Activated T-helper 1 cell treated with anti-CD3 and anti-CD28 coated beads, Interleukin-12 subunit alpha, Interleukin-12 subunit beta, Interleukin-2, Interleukin-4 antibody, amounts not matched to agents 30 ng/mL and 10 ng/mL and 1 ng/mL, durations not matched to agents 14 hours and 24 hours and 36 hours (primary cell): ENCODE measurements at regions of chr18 and their contacts with region 1.

Region 1: GRCh38 chr18:35616664-35617423 is 35.3 kb downstream of the GALNT1 start:
- DNase-seq: peak; percentile 45
- H3K4me3 Mint-ChIP-seq: no peak overlapping the region
- H3K27ac Mint-ChIP-seq: no peak overlapping the region
- H3K4me1 Mint-ChIP-seq: peaks cover 19% of the 10 kb centered on the region
- H3K27me3 Mint-ChIP-seq: no peaks in the 10 kb centered on the region

Region 2: GRCh38 chr18:34867520-34867919 is 749.3 kb before region 1 on chr18:
- intact Hi-C with region 1: loop called (anchors 5 kb)
- DNase-seq: no peak
- H3K4me3 Mint-ChIP-seq: no peak overlapping the region
- H3K27ac Mint-ChIP-seq: no peak overlapping the region
- H3K4me1 Mint-ChIP-seq: peaks cover 33% of the 10 kb centered on the region
- H3K27me3 Mint-ChIP-seq: peaks cover 20% of the 10 kb centered on the region

Region 3: GRCh38 chr18:35005963-35006577 is 610.8 kb before region 1 on chr18:
- intact Hi-C with region 1: no loop called
- DNase-seq: no peak
- H3K4me3 Mint-ChIP-seq: no peak overlapping the region
- H3K27ac Mint-ChIP-seq: no peak overlapping the region
- H3K4me1 Mint-ChIP-seq: no peaks in the 10 kb centered on the region
- H3K27me3 Mint-ChIP-seq: peaks cover 2% of the 10 kb centered on the region

Region 4: GRCh38 chr18:35407871-35408481 is 208.9 kb before region 1 on chr18:
- intact Hi-C with region 1: loop called (anchors 2 kb)
- DNase-seq: peak; percentile 25
- H3K4me3 Mint-ChIP-seq: no peak overlapping the region
- H3K27ac Mint-ChIP-seq: no peak overlapping the region
- H3K4me1 Mint-ChIP-seq: peaks cover 19% of the 10 kb centered on the region
- H3K27me3 Mint-ChIP-seq: peaks cover 5% of the 10 kb centered on the region

Region 5: GRCh38 chr18:35422237-35422636 is 194.6 kb before region 1 on chr18:
- intact Hi-C with region 1: no loop called
- DNase-seq: no peak
- H3K4me3 Mint-ChIP-seq: no peak overlapping the region
- H3K27ac Mint-ChIP-seq: no peak overlapping the region
- H3K4me1 Mint-ChIP-seq: no peaks in the 10 kb centered on the region
- H3K27me3 Mint-ChIP-seq: peaks cover 3% of the 10 kb centered on the region

Region 6: GRCh38 chr18:35484034-35484433 is 132.8 kb before region 1 on chr18:
- intact Hi-C with region 1: loop called (anchors 1 kb)
- DNase-seq: no peak
- H3K4me3 Mint-ChIP-seq: no peak overlapping the region
- H3K27ac Mint-ChIP-seq: no peak overlapping the region
- H3K4me1 Mint-ChIP-seq: peaks cover 3% of the 10 kb centered on the region
- H3K27me3 Mint-ChIP-seq: no peaks in the 10 kb centered on the region

Region 7: GRCh38 chr18:35605686-35606417 is 11.0 kb before region 1 on chr18:
- intact Hi-C with region 1: loop called (anchors 2 kb)
- DNase-seq: no peak
- H3K4me3 Mint-ChIP-seq: no peak overlapping the region
- H3K27ac Mint-ChIP-seq: no peak overlapping the region
- H3K4me1 Mint-ChIP-seq: no peaks in the 10 kb centered on the region
- H3K27me3 Mint-ChIP-seq: no peaks in the 10 kb centered on the region

Region 8: DNA sequence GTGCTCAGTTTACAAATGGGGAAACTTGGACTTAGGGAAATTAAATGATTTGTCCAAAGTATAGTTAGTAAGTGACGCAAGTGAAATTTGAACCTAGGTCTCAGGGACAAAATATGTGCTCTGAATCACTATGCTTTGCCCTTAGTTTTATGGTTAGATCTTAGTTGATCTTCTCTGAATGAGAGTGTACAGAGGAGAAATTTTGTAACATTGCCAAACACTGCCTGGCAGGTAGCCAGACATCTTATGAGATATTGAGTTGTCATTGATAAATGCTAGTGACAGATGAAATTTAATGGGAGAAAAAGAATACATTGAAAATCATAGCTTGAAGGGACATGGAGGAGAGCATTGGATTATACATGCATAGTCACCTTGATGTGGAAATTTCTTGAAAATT is 56.1 kb after region 1 on chr18:
- intact Hi-C with region 1: no loop called
- DNase-seq: no peak
- H3K4me3 Mint-ChIP-seq: no peak overlapping the region
- H3K27ac Mint-ChIP-seq: no peak overlapping the region
- H3K4me1 Mint-ChIP-seq: no peaks in the 10 kb centered on the region
- H3K27me3 Mint-ChIP-seq: no peaks in the 10 kb centered on the region